HEK293 (cell line): ENCODE measurements at regions of chr6 and their contacts with region 1.

Region 1: DNA sequence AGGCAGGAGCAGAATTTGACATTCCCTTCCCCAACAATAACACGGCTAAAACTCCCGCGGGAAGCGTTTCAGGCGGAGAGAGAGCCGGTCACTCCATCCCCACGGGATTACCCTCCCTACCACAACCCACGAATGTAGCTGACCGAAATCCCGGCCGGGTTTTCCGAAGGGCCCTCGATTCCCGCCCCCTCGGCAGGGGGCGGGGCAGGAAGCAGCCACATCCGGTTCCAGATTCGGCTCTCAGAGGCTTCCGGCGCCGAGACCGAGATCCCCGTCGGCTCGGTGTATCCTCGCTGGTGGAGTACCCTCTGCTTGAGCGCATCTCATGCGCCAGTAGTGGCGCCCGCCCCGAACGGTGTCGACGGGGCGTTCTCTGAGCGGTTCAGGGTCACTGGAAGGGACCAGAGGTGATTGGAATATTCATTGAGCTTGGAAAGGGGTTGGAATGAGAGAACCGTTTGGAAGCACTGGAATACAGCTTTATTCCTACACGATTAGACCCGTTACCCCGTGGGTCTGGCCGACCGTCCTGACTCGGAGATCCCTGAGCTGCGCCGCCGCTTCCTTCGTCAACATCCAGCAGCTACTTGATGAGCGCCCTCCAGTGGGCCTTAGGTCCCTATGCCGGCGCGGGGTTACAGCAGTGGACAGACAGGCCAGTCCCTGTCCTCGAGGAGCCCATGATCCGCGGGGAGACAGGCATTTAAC is 649 bp upstream of the RGL2 start:
- H3K4me3 ChIP-seq: peak overlapping the region; percentile 74
- H3K27ac ChIP-seq: peak overlapping the region; percentile 91
- H3K4me1 ChIP-seq: no peaks in the 10 kb centered on the region
- CTCF ChIP-seq: peak; percentile 90

Region 2: GRCh38 chr6:31622684-31623091 is 1676.7 kb before region 1 on chr6:
- CTCF ChIA-PET with region 1: no interaction called
- POLR2A ChIA-PET with region 1: no interaction called
- H3K4me3 ChIP-seq: peak overlapping the region; percentile 97; the same call in 1 of the 2 replicates
- H3K27ac ChIP-seq: peak overlapping the region; percentile 99
- H3K4me1 ChIP-seq: peaks cover 7% of the 10 kb centered on the region; the same call in 1 of the 2 replicates
- CTCF ChIP-seq: no peak

Region 3: GRCh38 chr6:33288921-33289748 is 10.3 kb before region 1 on chr6 and contains the starts of genes PFDN6 and WDR46:
- CTCF ChIA-PET with region 1: interaction called, 33 read pairs
- POLR2A ChIA-PET with region 1: interaction called, 53 read pairs
- H3K4me3 ChIP-seq: peak within 1 kb of the TSS; percentile 79
- H3K27ac ChIP-seq: peak within 1 kb of the TSS; percentile 44
- H3K4me1 ChIP-seq: peaks cover 11% of the 10 kb centered on the region; the same call in 1 of the 2 replicates
- CTCF ChIP-seq: no peak

Region 4: DNA sequence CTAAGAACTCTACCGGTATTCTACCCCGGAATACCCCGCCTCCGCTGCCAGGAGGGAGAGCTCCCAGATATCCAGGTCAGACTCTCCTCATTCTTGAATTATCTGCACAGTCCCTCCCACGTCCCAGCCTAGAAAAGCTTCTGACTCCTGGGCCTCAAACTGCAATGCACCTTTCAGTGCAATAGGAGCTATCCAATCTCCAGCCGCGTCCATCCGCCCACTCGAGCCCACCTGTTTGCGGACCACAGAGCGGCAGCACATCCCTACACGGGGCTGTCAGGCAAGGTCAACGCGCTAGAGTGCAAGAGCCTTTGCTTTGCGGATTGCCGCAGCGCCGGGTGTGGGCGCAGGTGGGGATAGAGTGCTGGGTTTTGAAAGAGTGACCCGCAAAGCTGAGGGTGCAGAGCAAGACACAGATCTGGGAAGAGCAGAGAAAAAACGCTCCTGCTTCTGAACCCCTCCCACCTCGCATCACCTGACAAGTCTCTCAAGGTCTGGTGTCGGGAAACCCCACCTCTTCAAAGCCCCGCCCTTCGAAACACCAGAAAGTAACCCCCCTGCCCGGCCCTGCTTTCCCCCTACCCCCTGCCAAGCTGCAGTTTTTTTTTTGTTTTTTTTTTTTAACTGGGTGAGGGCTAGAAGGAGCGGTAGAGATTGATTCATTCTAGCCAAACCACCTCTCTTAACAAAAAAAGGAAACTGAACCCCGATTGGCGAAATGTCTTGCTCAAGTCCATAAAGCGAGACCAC is 13.2 kb after region 1 on chr6:
- CTCF ChIA-PET with region 1: interaction called, 53 read pairs
- POLR2A ChIA-PET with region 1: interaction called, 57 read pairs
- H3K4me3 ChIP-seq: peak overlapping the region; percentile 61
- H3K27ac ChIP-seq: peak overlapping the region; percentile 79
- H3K4me1 ChIP-seq: peaks cover 5% of the 10 kb centered on the region
- CTCF ChIP-seq: peak; percentile 71

Region 5: GRCh38 chr6:33336495-33336894 is 37.1 kb after region 1 on chr6:
- CTCF ChIA-PET with region 1: no interaction called
- POLR2A ChIA-PET with region 1: no interaction called
- H3K4me3 ChIP-seq: no peak overlapping the region
- H3K27ac ChIP-seq: no peak overlapping the region
- H3K4me1 ChIP-seq: no peaks in the 10 kb centered on the region
- CTCF ChIP-seq: no peak

Region 6: DNA sequence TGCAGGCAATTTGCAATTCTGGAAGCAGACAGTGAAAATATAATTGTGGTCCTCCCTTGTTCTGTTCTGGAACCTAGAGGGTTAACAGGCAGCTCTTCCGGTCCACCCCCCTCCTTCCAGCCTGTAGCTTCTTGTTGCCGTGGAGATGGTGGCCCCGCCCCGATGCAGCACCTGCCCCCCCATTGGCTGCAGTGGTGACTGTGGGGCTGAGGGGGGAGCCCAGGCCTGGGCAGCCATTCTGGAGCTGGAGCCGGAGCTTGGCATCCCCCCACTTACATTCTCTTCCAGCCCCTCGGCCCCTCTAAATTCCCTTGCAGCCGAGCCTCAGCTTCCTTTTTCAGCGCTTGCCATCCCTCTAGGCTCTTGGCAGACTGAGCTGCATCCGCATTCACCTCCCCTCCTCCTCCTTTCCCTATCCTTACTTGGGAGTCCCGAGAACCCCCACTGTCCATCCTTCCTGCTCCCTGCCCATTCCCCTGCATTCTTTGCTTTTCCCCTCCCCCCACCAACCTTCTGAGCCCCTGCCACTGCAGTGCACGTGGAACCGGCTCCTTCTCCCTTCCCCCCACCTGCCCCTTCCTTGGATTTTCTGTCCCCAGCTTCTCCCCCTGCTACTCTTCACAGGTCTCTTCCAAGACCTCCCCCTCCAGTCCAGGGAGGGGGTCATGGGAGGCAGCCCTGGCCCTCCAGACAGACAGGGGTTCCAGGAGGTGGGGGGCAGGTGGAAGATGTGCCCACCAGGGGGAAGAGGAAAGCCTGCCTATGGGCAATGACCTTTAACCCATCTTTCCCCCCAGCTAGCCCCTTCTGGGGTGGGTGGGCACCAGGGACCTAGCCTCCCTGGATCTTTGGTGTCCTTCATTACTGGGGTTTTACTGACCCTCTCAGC is 131.8 kb after region 1 on chr6:
- CTCF ChIA-PET with region 1: interaction called, 6 read pairs
- POLR2A ChIA-PET with region 1: interaction called, 10 read pairs
- H3K4me3 ChIP-seq: no peak overlapping the region
- H3K27ac ChIP-seq: no peak overlapping the region
- H3K4me1 ChIP-seq: peaks cover 10% of the 10 kb centered on the region
- CTCF ChIP-seq: no peak